GM12878 (cell line): ENCODE measurements at regions of chr2 and their contacts with region 1.

Region 1: GRCh38 chr2:101349893-101350662 is 37.2 kb downstream of the CREG2 start:
- DNase-seq: no peak
- ATAC-seq: peak; percentile 33; the same call in 1 of the 3 replicates
- H3K4me3 ChIP-seq: no peak overlapping the region
- H3K27ac ChIP-seq: no peak overlapping the region
- H3K4me1 ChIP-seq: no peaks in the 10 kb centered on the region
- H3K27me3 ChIP-seq: no peaks in the 10 kb centered on the region; a peak in 2 of 4 replicates
- CTCF ChIP-seq: peak in 1 of 3 experiments; percentile 10; a peak in 1 of 6 replicates
- EP300 ChIP-seq: no peak
- POLR2A ChIP-seq: no peak
- RAD21 ChIP-seq: no peak

Region 2: GRCh38 chr2:101371636-101372035 is 21.6 kb after region 1 on chr2:
- CTCF ChIA-PET with region 1: no interaction called
- POLR2A ChIA-PET with region 1: no interaction called
- RAD21 ChIA-PET with region 1: no interaction called
- SMC1A ChIA-PET with region 1: no interaction called
- in situ Hi-C with region 1: no loop called
- intact Hi-C with region 1: no loop called
- DNase-seq: no peak
- ATAC-seq: no peak
- H3K4me3 ChIP-seq: no peak overlapping the region
- H3K27ac ChIP-seq: no peak overlapping the region
- H3K4me1 ChIP-seq: no peaks in the 10 kb centered on the region
- H3K27me3 ChIP-seq: no peaks in the 10 kb centered on the region
- CTCF ChIP-seq: no peak
- EP300 ChIP-seq: no peak
- POLR2A ChIP-seq: no peak
- RAD21 ChIP-seq: no peak

Region 3: GRCh38 chr2:101387151-101387807 is 37.2 kb after region 1 on chr2 and contains the start of gene CREG2:
- CTCF ChIA-PET with region 1: no interaction called
- POLR2A ChIA-PET with region 1: no interaction called
- RAD21 ChIA-PET with region 1: no interaction called
- SMC1A ChIA-PET with region 1: no interaction called
- in situ Hi-C with region 1: no loop called
- intact Hi-C with region 1: no loop called
- DNase-seq: no peak
- ATAC-seq: peak; percentile 57
- H3K4me3 ChIP-seq: no peak within 1 kb of the TSS
- H3K27ac ChIP-seq: no peak within 1 kb of the TSS
- H3K4me1 ChIP-seq: no peaks in the 10 kb centered on the region
- H3K27me3 ChIP-seq: peaks cover 3 to 8% of the 10 kb centered on the region in 2 experiments
- CTCF ChIP-seq: 0 out of 6 replicates have a peak, but pooled peaks of 1 of the 3 experiments have one; percentile 10
- EP300 ChIP-seq: no peak
- POLR2A ChIP-seq: no peak
- RAD21 ChIP-seq: no peak
- polyA plus RNA-seq, gene CREG2: not detected

Region 4: GRCh38 chr2:101400048-101400447 is 50.0 kb after region 1 on chr2:
- CTCF ChIA-PET with region 1: interaction called, 3 read pairs
- POLR2A ChIA-PET with region 1: no interaction called
- RAD21 ChIA-PET with region 1: no interaction called
- SMC1A ChIA-PET with region 1: no interaction called
- in situ Hi-C with region 1: no loop called
- intact Hi-C with region 1: loop called (anchors 5 kb)
- DNase-seq: no peak
- ATAC-seq: no peak
- H3K4me3 ChIP-seq: no peak overlapping the region
- H3K27ac ChIP-seq: no peak overlapping the region
- H3K4me1 ChIP-seq: no peaks in the 10 kb centered on the region
- H3K27me3 ChIP-seq: peaks cover 0 to 14% of the 10 kb centered on the region in 2 experiments; a peak in 2 of 4 replicates
- CTCF ChIP-seq: no peak
- EP300 ChIP-seq: no peak
- POLR2A ChIP-seq: no peak
- RAD21 ChIP-seq: no peak

Region 5: GRCh38 chr2:101463891-101464641 is 114.0 kb after region 1 on chr2:
- CTCF ChIA-PET with region 1: no interaction called
- POLR2A ChIA-PET with region 1: no interaction called
- RAD21 ChIA-PET with region 1: no interaction called
- SMC1A ChIA-PET with region 1: no interaction called
- in situ Hi-C with region 1: no loop called
- intact Hi-C with region 1: no loop called
- DNase-seq: no peak
- ATAC-seq: no peak
- H3K4me3 ChIP-seq: no peak overlapping the region
- H3K27ac ChIP-seq: no peak overlapping the region
- H3K4me1 ChIP-seq: no peaks in the 10 kb centered on the region
- H3K27me3 ChIP-seq: no peaks in the 10 kb centered on the region
- CTCF ChIP-seq: no peak
- EP300 ChIP-seq: no peak
- POLR2A ChIP-seq: no peak
- RAD21 ChIP-seq: no peak